ENCODE measurements at regions of chr11 and their contacts with region 1.

Region 1: GRCh38 chr11:35485656-35486322 is 39.6 kb downstream of the PAMR1 start:
- DNase-seq: peak; percentile 68 to 89 (median 82)
- H3K4me3 ChIP-seq: no peak overlapping the region
- H3K27ac ChIP-seq: peak overlapping the region in 7 of 59 donors; percentile 35 to 56 (median 45)
- H3K27me3 ChIP-seq: no peaks in the 10 kb centered on the region
- CTCF ChIP-seq: peak; percentile 74 to 96 (median 90)

Region 2: DNA sequence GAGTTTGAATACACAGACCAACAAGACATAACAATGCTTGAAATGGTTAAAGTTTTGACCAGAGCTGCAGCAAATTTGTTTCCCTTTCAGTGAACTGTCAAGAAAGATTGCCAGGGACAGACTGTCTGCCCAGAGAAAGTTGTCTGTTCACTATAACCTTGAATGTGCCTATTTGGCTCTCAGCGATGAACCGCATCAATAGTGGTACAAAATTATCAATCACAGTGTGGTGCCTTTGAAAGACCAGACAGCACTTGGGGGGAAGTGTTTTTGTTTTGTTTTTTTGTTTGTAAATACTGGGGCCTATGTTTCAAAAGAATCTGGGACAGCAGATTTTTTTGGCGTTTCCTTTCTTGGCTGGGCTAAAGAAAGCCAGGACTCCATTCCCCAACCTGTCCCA is 223.7 kb before region 1 on chr11:
- intact Hi-C with region 1: no loop called
- DNase-seq: no peak
- H3K4me3 ChIP-seq: no peak overlapping the region
- H3K27ac ChIP-seq: peak overlapping the region in 10 of 59 donors; percentile 1 to 54 (median 40)
- H3K27me3 ChIP-seq: no peaks in the 10 kb centered on the region
- CTCF ChIP-seq: no peak

Region 3: DNA sequence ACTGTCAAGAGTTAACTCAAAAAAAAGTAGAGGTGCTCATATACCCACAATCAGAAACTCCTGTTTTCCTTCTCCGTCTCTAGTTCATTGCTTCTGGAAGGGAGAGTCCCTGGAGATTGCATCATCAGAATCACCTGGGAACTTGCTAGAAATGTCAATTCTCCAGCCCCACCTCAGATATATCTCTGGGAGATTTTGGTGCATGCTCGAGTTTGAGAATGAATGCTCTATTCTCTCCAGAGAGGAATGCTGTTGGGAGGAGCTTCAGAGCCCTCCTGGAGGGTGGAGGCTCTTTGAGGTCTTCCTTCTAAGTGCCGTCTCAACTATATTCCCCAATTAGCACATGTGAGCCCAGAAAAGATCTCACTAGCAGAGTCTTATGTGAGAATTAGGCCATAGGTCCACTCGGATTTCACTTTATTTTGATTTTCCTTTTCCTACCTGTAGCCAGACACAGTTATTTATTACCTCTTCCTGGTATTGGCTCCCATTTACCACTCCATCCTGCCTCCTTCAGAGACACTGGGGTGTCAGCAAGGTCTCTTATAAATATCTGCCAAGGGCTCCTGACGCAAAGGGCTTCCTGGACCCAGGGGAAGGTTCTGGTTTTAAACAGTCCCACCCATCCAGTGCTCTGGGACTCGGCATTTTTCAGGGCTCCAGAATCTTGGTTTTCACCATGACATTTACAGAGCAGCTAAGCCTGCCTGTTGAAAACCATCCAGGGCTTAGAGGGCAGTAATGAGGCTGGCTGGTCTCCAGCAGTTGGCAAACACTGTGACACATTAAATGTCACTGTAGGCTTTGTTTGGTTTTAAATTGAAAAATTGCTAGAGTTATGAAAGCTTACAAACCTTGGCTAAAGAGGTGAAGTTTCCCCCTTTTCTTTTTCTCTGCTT is 210.6 kb before region 1 on chr11:
- intact Hi-C with region 1: no loop called
- DNase-seq: peak in 6 of 10 donors; percentile 33 to 73 (median 48)
- H3K4me3 ChIP-seq: no peak overlapping the region
- H3K27ac ChIP-seq: peak overlapping the region in 46 of 59 donors; percentile 2 to 89 (median 57)
- H3K27me3 ChIP-seq: no peaks in the 10 kb centered on the region
- CTCF ChIP-seq: peak in 1 of 56 donors; percentile 13

Region 4: GRCh38 chr11:35593143-35593542 is 107.4 kb after region 1 on chr11:
- intact Hi-C with region 1: no loop called
- DNase-seq: no peak
- H3K4me3 ChIP-seq: no peak overlapping the region
- H3K27ac ChIP-seq: no peak overlapping the region
- H3K27me3 ChIP-seq: no peaks in the 10 kb centered on the region
- CTCF ChIP-seq: no peak

Region 5: DNA sequence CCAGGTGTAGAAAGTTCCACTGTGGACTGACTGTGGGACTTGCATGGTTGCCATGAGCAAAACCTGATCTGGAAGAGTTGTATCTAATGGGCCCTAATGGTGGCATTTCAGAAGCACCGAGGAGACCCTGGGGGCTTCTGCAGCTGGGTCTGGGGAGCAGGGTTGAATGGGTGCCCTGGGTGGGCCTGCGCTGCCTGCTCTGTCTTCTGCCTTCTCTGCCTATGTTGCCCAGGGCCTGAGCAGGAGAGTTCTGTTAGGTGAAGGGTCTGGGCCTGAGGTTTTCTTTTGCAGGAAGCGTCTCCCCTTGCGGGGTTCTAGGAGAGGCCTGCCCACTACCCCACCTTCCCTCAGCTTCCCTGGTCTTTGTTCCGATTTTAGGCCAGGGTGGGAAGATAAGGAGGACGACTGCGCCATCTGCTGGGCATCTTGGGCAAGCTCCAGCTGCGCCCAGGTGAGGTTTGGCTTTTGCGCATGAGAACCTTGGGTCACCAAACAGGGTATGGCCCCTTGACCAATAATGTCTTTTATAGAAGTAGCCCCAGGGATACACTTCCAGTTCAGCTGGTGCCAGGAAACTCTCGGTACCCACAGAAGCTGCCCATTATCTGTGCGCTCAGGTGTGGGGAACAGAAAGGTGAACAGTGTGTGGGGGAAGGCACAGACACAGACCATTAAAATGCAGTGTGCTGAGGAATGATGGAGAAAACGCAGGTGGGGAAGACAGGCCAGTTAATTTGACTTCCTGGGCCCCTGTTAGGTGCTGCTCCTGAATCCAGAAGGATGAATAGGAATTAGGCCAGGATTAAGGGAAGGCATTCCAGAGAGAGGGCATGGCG is 780.2 kb after region 1 on chr11:
- intact Hi-C with region 1: loop called in 1 of 2 experiments (anchors 5 kb)
- DNase-seq: peak in 6 of 10 donors; percentile 27 to 65 (median 46)
- H3K4me3 ChIP-seq: no peak overlapping the region
- H3K27ac ChIP-seq: no peak overlapping the region
- H3K27me3 ChIP-seq: no peaks in the 10 kb centered on the region
- CTCF ChIP-seq: peak; percentile 60 to 91 (median 81)

Measured in dorsolateral prefrontal cortex (tissue), 120 donors.